ENCODE measurements at regions of chr10 and their contacts with region 1.

Region 1: DNA sequence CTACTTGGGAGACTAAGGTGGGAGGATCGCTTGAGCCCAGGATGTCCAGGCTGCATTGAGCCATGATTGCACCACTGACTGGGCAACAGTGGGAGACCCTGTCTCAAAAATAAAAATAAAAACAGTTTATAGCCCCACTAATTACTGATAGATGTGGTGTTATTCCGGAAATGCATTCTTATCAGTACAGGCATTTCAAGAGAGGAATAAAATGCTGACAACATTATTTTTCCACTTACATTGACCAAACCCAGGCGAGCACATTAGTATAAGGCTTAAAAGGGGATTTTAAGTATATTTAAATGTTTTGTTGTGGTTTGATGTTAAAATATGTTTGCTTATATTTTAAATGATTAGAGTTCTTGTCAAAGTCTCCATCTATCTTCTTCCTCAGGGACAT is 359.5 kb downstream of the PLXDC2 start:
- DNase-seq: no peak
- H3K4me3 ChIP-seq: no peak overlapping the region
- H3K27ac ChIP-seq: no peak overlapping the region
- H3K4me1 ChIP-seq: no peaks in the 10 kb centered on the region
- H3K27me3 ChIP-seq: no peaks in the 10 kb centered on the region
- CTCF ChIP-seq: no peak
- EP300 ChIP-seq: no peak
- POLR2A ChIP-seq: no peak

Region 2: GRCh38 chr10:20158086-20158485 is 17.6 kb before region 1 on chr10:
- in situ Hi-C with region 1: no loop called
- intact Hi-C with region 1: loop called (anchors 2 kb)
- DNase-seq: no peak
- H3K4me3 ChIP-seq: no peak overlapping the region
- H3K27ac ChIP-seq: no peak overlapping the region
- H3K4me1 ChIP-seq: no peaks in the 10 kb centered on the region
- H3K27me3 ChIP-seq: no peaks in the 10 kb centered on the region
- CTCF ChIP-seq: no peak
- EP300 ChIP-seq: no peak
- POLR2A ChIP-seq: no peak